ENCODE measurements at regions of chr14 and their contacts with region 1.

Region 1: GRCh38 chr14:55411426-55412389 is at the start of gene ATG14:
- DNase-seq: peak; percentile 87
- H3K4me3 Mint-ChIP-seq: peak within 1 kb of the TSS; percentile 81
- H3K27ac Mint-ChIP-seq: peak within 1 kb of the TSS; percentile 83
- H3K4me1 Mint-ChIP-seq: peaks cover 33% of the 10 kb centered on the region
- H3K27me3 Mint-ChIP-seq: no peaks in the 10 kb centered on the region
- total RNA-seq, gene ATG14: 4.6 to 4.9 TPM

Region 2: DNA sequence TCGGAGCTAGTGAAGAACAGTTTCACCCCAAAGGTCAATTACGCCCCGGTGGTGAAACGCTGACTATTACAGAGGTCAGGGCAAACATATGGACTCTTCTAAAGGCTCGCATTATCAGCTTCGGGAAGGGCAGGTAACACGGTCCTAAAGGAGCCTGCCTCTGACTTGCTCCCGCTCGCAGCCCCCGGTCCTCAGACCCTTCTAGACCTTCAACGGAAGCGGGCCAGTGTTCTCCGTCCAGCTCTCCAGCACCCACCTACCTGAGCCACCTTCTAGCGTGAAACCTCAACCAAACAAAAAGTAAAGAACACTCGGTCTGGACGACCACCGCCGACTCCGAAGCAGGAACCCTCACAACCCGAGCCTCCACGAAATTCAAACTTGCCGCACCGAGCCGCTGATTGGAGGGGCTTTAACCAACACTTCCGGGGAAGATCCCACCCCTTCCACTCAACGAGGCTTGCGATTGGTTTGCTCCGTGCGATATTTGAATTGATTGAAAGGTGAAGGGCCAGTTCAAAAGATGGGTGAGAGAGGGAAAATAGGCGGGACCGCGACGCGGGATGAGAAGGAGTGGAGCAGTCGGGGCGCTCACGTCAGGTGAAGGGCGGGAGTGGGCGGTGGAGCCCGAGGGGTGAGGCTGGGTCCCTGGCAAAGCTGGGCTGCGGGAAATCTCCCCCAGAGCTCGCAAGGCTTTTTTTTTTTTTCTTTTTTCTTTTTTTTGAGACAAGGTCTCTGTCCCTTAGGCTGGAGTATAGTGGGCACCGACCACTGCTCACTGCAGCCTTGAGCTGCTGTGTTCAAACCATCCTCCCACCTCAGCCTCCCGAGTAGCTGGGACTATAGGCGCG is 220.3 kb before region 1 on chr14 and contains the start of gene DLGAP5:
- CTCF ChIA-PET with region 1: no interaction called
- intact Hi-C with region 1: loop called (anchors 5 kb)
- DNase-seq: peak; percentile 97
- H3K4me3 Mint-ChIP-seq: peak within 1 kb of the TSS; percentile 99
- H3K27ac Mint-ChIP-seq: peak within 1 kb of the TSS; percentile 89
- H3K4me1 Mint-ChIP-seq: peaks cover 26% of the 10 kb centered on the region
- H3K27me3 Mint-ChIP-seq: peaks cover 2% of the 10 kb centered on the region
- total RNA-seq, gene DLGAP5: 117 to 120 TPM

Region 3: GRCh38 chr14:55399852-55400251 is 11.9 kb before region 1 on chr14:
- CTCF ChIA-PET with region 1: no interaction called
- intact Hi-C with region 1: no loop called
- DNase-seq: no peak
- H3K4me3 Mint-ChIP-seq: no peak overlapping the region
- H3K27ac Mint-ChIP-seq: no peak overlapping the region
- H3K4me1 Mint-ChIP-seq: peaks cover 40% of the 10 kb centered on the region
- H3K27me3 Mint-ChIP-seq: no peaks in the 10 kb centered on the region

Measured in activated naive CD4-positive, alpha-beta T cell treated with anti-CD3 and anti-CD28 coated beads for 36 hours (primary cell).